Activated B cell treated with CpG ODN at 0.5 μM for 24 hours (primary cell): ENCODE measurements at regions of chr18 and their contacts with region 1.

Region 1: GRCh38 chr18:58781627-58782194 is 83.0 kb upstream of the ZNF532 start:
- DNase-seq: peak; percentile 44
- ATAC-seq: peak; percentile 94
- H3K4me3 Mint-ChIP-seq: no peak overlapping the region
- H3K27ac Mint-ChIP-seq: no peak overlapping the region
- H3K4me1 Mint-ChIP-seq: peaks cover 2% of the 10 kb centered on the region
- H3K27me3 Mint-ChIP-seq: no peaks in the 10 kb centered on the region
- CTCF ChIP-seq: no peak

Region 2: DNA sequence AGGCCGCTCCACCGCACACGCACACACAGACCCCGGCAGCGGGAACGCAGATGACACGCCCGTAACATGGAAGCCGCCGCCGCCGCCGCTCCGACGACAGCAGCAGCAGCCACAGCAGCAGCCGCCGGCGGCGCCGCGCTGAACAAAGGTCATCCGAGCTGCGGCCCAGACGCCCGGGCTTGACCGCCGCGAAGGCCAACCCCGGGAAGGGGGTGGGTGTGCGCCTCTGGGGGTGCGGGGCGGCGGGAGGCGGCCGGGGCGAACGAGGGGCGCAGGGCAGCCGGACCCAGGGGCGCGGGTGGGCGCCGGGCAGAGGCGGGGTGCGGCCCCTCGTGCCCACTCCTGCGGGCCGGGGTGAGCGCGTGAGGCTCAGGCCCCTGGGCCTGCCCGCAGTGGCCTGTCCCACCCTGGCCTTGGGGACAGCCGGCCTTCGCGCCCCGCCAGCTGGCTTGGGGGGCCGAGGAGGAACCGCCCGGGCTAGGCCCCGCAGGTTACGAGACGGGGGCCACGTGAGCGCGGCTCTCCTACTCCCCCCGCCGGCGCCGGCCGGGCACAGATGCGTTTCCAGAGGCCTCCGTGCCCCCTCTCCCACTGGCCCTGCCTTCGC is 81.9 kb after region 1 on chr18:
- CTCF ChIA-PET with region 1: interaction called, 3 read pairs
- POLR2A ChIA-PET with region 1: no interaction called
- intact Hi-C with region 1: loop called (anchors 5 kb)
- DNase-seq: peak; percentile 61
- ATAC-seq: peak; percentile 66
- H3K4me3 Mint-ChIP-seq: peak overlapping the region; percentile 76
- H3K27ac Mint-ChIP-seq: peak overlapping the region; percentile 85
- H3K4me1 Mint-ChIP-seq: peaks cover 32% of the 10 kb centered on the region
- H3K27me3 Mint-ChIP-seq: no peaks in the 10 kb centered on the region
- CTCF ChIP-seq: no peak

Region 3: DNA sequence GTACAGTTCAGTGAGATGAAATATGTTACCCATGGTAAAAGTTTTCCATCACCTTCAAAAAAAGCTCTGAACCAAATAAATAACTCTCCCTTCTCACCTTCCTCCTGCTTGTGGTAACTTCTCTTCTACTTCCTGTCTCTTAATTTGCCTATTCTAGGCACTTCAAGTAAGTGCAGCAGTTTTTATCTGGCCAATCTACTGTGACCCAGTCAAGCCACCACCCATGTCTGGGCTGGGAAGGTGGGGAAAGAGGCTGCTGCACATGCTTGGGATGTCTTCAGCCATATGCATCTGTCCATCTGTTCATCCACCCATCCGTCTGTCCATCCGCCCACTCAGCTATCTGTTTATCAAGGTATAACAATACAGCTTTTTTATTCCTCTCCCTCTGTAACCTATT is 114.6 kb after region 1 on chr18:
- CTCF ChIA-PET with region 1: interaction called, 3 read pairs
- POLR2A ChIA-PET with region 1: no interaction called
- intact Hi-C with region 1: loop called (anchors 5 kb)
- DNase-seq: no peak
- ATAC-seq: peak; percentile 92
- H3K4me3 Mint-ChIP-seq: peak overlapping the region; percentile 80
- H3K27ac Mint-ChIP-seq: peak overlapping the region; percentile 81
- H3K4me1 Mint-ChIP-seq: peaks cover 82% of the 10 kb centered on the region
- H3K27me3 Mint-ChIP-seq: no peaks in the 10 kb centered on the region
- CTCF ChIP-seq: no peak

Region 4: GRCh38 chr18:58947136-58947732 is 165.5 kb after region 1 on chr18:
- CTCF ChIA-PET with region 1: no interaction called
- POLR2A ChIA-PET with region 1: no interaction called
- intact Hi-C with region 1: loop called (anchors 5 kb)
- DNase-seq: no peak
- ATAC-seq: no peak
- H3K4me3 Mint-ChIP-seq: no peak overlapping the region
- H3K27ac Mint-ChIP-seq: peak overlapping the region; percentile 93
- H3K4me1 Mint-ChIP-seq: peaks cover 54% of the 10 kb centered on the region
- H3K27me3 Mint-ChIP-seq: no peaks in the 10 kb centered on the region
- CTCF ChIP-seq: no peak

Region 5: DNA sequence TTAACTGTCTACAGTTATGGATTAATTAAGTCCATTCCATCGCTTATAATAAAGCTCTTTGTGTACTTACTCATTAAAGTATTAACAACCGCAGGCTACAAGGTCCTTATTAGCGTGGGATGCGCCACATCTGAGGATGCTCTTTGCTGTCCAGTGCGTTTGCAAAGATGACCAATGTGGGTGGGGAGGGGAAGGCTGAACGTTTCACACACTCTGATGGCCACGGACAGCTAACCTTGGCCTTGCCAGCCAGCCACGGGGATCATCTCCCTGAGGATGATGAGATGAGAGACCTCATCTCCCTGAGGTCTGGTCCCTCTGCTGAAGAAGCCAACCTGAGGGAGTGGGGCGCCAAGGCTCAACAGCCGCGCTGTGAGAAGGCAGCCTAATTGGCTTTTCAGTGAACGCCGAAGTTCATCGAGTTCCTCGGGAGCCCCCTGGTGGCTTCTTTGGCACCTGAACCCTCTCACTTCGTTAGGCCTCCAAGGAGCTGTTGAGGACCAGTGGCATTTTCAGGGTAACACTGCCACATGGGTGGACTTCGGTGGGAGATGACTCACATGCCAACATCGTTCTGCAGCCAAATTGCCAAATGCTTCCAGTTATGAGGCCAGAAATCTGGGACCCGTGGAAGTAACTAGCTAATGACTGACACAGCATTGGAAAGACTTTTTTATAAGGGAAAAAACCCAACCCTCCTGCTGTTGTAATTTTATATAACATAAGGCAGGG is 288.6 kb after region 1 on chr18:
- CTCF ChIA-PET with region 1: interaction called, 125 read pairs
- POLR2A ChIA-PET with region 1: no interaction called
- intact Hi-C with region 1: loop called (anchors 1 kb)
- DNase-seq: peak; percentile 68
- ATAC-seq: peak; percentile 85
- H3K4me3 Mint-ChIP-seq: no peak overlapping the region
- H3K27ac Mint-ChIP-seq: peak overlapping the region; percentile 54
- H3K4me1 Mint-ChIP-seq: peaks cover 25% of the 10 kb centered on the region
- H3K27me3 Mint-ChIP-seq: no peaks in the 10 kb centered on the region
- CTCF ChIP-seq: peak; percentile 39

Region 6: DNA sequence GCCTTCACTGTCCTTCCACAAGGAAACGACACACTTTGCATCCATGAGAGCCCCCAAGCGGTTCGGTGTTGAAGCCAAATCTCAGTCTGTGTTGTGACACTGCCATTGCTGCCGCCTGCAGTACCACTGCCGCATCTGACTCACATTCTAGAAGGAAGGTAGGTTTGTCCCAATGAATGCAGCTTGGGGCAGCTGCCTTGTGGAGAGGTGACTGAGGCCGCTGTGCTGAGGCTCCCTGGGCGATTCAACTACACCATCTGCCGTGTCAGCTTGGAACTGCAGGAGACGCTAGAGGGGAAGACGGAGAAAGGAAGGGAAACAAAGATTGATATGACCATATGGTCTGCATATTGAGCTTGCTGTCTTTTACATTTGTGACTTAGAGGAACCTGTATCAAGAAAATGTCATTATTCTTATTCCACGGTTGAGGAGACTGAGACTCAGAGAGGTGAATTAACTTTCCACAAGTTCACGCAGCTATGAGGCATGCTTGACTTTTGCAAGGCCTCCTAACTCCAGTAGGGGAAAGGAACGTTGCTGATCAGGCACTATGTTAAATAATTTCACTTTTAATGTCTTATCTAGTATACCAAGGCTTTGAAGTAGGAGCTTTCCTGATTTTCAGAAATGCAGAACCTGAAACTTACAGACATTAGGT is 620.9 kb after region 1 on chr18:
- CTCF ChIA-PET with region 1: no interaction called
- POLR2A ChIA-PET with region 1: no interaction called
- intact Hi-C with region 1: loop called (anchors 5 kb)
- DNase-seq: peak; percentile 50
- ATAC-seq: peak; percentile 96
- H3K4me3 Mint-ChIP-seq: no peak overlapping the region
- H3K27ac Mint-ChIP-seq: no peak overlapping the region
- H3K4me1 Mint-ChIP-seq: peaks cover 3% of the 10 kb centered on the region
- H3K27me3 Mint-ChIP-seq: peaks cover 4% of the 10 kb centered on the region
- CTCF ChIP-seq: no peak